Sciatic nerve (tissue), 2 donors: ENCODE measurements at regions of chr17 and their contacts with region 1.

Region 1: GRCh38 chr17:48997083-48997826 is at the start of gene IGF2BP1:
- DNase-seq: no peak
- ATAC-seq: no peak
- total RNA-seq, gene IGF2BP1: not detected

Region 2: DNA sequence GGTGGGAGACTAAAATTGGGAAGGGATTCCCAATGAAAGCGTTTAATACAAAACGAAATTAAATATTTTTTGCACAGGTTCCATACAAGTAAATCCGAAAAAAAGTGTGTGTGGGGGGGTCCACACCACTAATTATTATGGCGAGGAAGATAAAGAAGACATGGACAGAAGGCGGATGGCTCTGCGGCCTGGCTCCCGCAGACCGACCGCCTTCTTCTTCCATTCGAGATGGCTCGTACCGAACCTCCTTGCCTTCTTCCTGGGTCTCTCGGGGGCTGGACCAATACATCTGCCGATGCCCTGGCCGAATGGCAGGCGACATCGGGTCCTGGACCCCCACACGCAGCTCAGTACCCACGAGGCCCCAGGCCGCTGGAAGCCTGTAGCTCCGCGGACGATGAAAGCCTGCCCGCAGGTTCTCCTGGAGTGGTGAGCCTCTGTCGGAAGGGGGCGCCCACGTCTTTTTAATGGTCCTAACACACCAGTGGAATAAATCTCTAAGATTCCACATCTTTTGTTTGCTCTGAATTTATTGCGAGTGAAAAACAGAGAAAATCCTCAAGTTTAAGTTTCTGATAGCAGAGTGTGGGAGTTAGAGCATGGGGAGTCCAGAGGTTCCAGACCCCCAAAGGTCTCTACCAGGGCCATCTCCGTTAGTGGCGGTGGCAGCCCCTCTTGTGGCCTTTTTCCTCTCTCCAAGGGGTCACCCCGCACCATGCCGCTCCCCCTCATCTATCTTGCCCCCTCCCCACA is 272.8 kb before region 1 on chr17:
- intact Hi-C with region 1: loop called (anchors 10 kb)
- DNase-seq: peak; percentile 93
- ATAC-seq: peak; percentile 87

Region 3: DNA sequence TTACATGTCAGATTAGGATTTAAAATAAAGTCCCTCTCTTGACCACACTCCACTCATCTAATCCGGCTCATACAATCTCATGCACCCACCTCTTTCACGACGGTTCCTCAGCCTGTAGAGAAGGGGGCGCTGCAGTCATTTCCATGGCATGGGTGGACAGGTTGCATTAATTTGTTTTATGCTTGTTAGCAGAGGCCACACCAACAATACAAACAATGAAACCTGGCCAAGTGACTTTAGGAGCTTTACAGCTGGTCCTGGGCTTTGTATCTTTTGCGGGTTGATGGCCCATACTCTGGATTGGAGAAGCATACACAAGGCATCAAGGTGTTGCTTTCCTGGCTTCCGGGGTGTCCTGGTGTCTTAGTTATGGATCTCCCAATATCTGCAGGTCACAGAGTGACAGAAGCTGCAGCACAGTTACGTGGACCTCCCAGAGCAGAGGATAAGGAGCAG is 42.9 kb before region 1 on chr17:
- intact Hi-C with region 1: no loop called
- DNase-seq: no peak
- ATAC-seq: no peak

Region 4: GRCh38 chr17:49016788-49017463 is 19.7 kb after region 1 on chr17:
- intact Hi-C with region 1: no loop called
- DNase-seq: no peak
- ATAC-seq: peak; percentile 17